Dendritic cell treated with granulocyte-macrophage colony-stimulating factor and Interleukin-4, amounts not matched to agents 40 ng/mL and 50 ng/mL, for 4 days (primary cell): ENCODE measurements at regions of chr6 and their contacts with region 1.

Region 1: DNA sequence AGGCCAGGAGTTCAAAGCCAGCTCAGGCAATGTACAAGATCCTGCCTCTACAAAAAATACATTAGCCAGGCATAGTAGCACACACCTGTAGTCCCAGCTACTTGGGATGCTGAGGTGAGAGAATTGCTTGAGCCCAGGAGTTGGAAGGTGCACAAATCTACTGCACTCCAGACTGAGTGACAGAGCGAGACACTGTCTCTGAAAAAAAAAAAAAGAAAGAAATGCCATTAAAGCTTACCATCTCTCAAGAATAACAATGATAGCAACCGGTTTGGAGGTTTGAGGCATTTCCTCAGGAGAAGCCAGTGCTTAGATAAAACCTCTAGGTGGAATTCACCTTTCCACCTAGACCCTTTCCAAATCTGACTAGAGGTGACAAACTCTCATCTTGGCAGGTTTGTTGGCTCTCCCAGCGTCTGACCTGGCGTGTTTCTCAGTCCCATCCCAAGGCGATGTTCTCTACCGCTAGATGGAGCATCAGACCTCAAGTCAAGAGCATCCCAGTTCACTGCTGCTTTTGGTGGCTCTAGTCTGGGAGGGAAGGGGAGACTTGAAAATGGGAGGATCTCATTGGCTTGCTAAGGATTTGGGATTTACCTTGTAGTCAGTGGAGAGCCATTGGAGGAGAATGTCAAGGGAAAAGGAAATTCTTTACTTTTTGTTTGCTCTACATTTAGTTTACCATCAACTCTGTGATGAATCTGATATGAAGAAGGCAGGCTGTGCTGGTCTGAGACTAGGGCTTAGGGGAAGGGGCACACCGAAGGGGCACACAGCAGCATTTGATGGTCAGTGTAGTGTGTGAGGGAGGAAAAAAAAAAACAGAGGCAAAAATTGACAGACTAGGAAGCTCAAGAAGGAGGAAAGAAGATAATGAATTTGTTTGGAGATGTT is 67.9 kb downstream of the NCOA7 start:
- H3K4me3 Mint-ChIP-seq: no peak overlapping the region
- H3K27ac Mint-ChIP-seq: no peak overlapping the region
- H3K4me1 Mint-ChIP-seq: peaks cover 5% of the 10 kb centered on the region
- H3K27me3 Mint-ChIP-seq: no peaks in the 10 kb centered on the region

Region 2: DNA sequence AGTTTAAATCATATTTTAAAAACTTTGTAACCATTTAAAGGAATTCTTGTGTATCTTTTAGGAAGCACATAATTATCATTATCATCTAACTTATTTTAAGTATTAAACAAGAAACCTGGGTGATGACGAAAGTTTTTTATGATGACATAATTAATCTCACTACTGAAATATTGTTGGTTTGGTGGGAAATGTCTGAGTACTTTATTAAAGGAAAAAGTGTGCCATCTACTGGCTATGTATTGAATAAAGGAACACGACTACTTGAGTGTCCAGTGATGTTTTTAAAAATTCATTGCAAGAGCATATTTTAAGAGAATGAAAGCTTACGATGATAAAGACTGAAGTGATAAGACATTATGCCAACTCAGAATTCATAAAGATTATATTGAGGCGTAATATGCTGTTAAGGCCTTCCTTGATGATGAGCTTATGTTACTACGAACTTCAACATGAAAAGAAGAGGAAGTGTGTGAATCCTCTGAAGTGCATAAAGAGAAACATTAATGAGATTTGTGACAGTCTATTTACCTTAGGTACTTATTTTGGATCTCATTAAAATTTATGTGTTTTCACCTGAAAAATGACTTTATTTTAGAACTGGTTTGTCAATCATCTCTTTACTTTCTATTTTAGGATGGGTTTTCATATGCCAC is 115.7 kb after region 1 on chr6:
- intact Hi-C with region 1: loop called (anchors 5 kb)
- H3K4me3 Mint-ChIP-seq: no peak overlapping the region
- H3K27ac Mint-ChIP-seq: no peak overlapping the region
- H3K4me1 Mint-ChIP-seq: peaks cover 4% of the 10 kb centered on the region
- H3K27me3 Mint-ChIP-seq: no peaks in the 10 kb centered on the region

Region 3: GRCh38 chr6:126268092-126268491 is 409.4 kb after region 1 on chr6:
- intact Hi-C with region 1: no loop called
- H3K4me3 Mint-ChIP-seq: no peak overlapping the region
- H3K27ac Mint-ChIP-seq: no peak overlapping the region
- H3K4me1 Mint-ChIP-seq: no peaks in the 10 kb centered on the region
- H3K27me3 Mint-ChIP-seq: no peaks in the 10 kb centered on the region